PC-9 (cell line): ENCODE measurements at regions of chr2 and their contacts with region 1.

Region 1: GRCh38 chr2:25606892-25607291 is 66.5 kb downstream of the DTNB start:
- DNase-seq: no peak
- H3K4me3 ChIP-seq: no peak overlapping the region
- H3K27ac ChIP-seq: no peak overlapping the region
- H3K4me1 ChIP-seq: no peaks in the 10 kb centered on the region
- H3K27me3 ChIP-seq: no peaks in the 10 kb centered on the region
- CTCF ChIP-seq: peak; percentile 91

Region 2: GRCh38 chr2:25362049-25362433 is 244.9 kb before region 1 on chr2:
- CTCF ChIA-PET with region 1: interaction called, 11 read pairs
- POLR2A ChIA-PET with region 1: no interaction called
- intact Hi-C with region 1: no loop called
- DNase-seq: peak; percentile 77 to 93
- H3K4me3 ChIP-seq: peak overlapping the region; percentile 55
- H3K27ac ChIP-seq: no peak overlapping the region
- H3K4me1 ChIP-seq: 0 out of 2 replicates have a peak, but pooled peaks cover 7% of the 10 kb centered on the region
- H3K27me3 ChIP-seq: no peaks in the 10 kb centered on the region
- CTCF ChIP-seq: peak; percentile 97

Region 3: GRCh38 chr2:25639171-25639570 is 32.3 kb after region 1 on chr2:
- CTCF ChIA-PET with region 1: no interaction called
- POLR2A ChIA-PET with region 1: interaction called, 28 read pairs
- intact Hi-C with region 1: no loop called
- DNase-seq: no peak
- H3K4me3 ChIP-seq: no peak overlapping the region
- H3K27ac ChIP-seq: no peak overlapping the region
- H3K4me1 ChIP-seq: peaks cover 12% of the 10 kb centered on the region
- H3K27me3 ChIP-seq: no peaks in the 10 kb centered on the region
- CTCF ChIP-seq: no peak

Region 4: DNA sequence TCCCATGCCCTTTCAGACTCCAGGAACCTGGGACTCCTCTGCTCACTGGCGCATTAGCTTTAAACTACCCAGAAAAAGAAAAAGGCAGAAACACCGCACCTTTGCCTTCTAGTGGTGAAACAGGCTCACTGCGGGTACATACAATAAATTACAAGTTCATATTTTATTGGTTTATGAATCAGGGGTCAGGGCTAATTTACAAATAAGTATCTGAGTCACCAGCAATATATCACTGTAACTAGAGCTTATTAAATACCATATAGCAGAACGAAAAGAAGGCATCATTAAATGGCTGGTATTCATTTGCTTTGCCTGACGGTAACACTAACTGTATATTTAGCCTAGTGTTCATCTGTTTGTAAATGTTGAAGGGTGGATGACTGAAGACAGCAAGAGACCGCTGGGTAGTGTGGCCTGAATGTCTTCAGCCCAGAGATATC is 93.3 kb after region 1 on chr2:
- CTCF ChIA-PET with region 1: interaction called, 41 read pairs
- POLR2A ChIA-PET with region 1: no interaction called
- intact Hi-C with region 1: loop called (anchors 1 kb)
- DNase-seq: peak; percentile 25 to 94
- H3K4me3 ChIP-seq: no peak overlapping the region
- H3K27ac ChIP-seq: no peak overlapping the region
- H3K4me1 ChIP-seq: peaks cover 34% of the 10 kb centered on the region
- H3K27me3 ChIP-seq: no peaks in the 10 kb centered on the region
- CTCF ChIP-seq: peak; percentile 88

Region 5: DNA sequence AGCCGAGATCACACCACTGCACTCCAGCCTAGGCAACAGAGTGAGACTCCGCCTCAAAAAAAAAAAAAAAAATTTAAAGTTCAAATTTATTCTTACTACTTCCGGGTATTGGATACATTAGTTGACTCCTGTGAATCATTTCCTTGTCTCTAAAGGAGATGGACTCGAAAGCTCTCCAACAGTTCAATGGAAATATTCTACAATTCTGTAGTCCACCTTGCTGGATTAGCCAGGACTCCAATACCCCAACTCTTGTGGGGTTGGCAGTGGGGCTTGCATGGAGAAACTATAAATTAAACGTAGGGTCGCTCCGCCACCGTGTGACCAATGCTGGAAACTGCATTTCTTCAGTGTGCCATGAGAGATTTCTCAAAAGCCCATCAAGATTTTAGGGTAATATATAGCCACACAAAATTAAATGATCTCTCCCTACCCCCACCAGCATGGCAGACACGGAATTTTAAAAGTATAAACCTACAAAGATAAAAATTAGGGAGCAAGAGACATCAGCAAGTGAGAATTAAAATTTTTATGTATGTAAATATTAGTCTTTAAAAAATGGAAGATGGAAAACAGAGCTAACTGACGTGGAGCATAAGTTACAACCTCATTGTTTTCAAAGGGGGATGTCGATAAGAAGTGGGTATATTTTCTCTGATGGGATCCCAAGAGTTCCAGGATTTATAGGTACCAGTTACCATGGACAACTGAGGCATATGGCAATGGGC is 538.2 kb after region 1 on chr2:
- CTCF ChIA-PET with region 1: no interaction called
- POLR2A ChIA-PET with region 1: interaction called, 4 read pairs
- intact Hi-C with region 1: loop called (anchors 10 kb)
- DNase-seq: peak; percentile 51 to 60
- H3K4me3 ChIP-seq: no peak overlapping the region
- H3K27ac ChIP-seq: no peak overlapping the region
- H3K4me1 ChIP-seq: peaks cover 23% of the 10 kb centered on the region
- H3K27me3 ChIP-seq: no peaks in the 10 kb centered on the region
- CTCF ChIP-seq: peak; percentile 88